OCI-LY7 (cell line): ENCODE measurements at regions of chr9 and their contacts with region 1.

Region 1: GRCh38 chr9:114930056-114930812 is at the start of gene TNFSF8:
- DNase-seq: peak; percentile 90
- H3K4me3 ChIP-seq: peak within 1 kb of the TSS; percentile 76
- H3K27ac ChIP-seq: peak within 1 kb of the TSS; percentile 90
- H3K4me1 ChIP-seq: peaks cover 42% of the 10 kb centered on the region
- CTCF ChIP-seq: 0 out of 2 replicates have a peak, but pooled peaks have one; percentile 18
- total RNA-seq, gene TNFSF8: 27.7 and 28.4 TPM in 2 replicates

Region 2: GRCh38 chr9:114385412-114386181 is 544.6 kb before region 1 on chr9:
- CTCF ChIA-PET with region 1: no interaction called
- POLR2A ChIA-PET with region 1: interaction called, 16 read pairs
- intact Hi-C with region 1: loop called (anchors 5 kb)
- DNase-seq: peak; percentile 95
- H3K4me3 ChIP-seq: peak overlapping the region; percentile 76
- H3K27ac ChIP-seq: peak overlapping the region; percentile 97
- H3K4me1 ChIP-seq: peaks cover 70% of the 10 kb centered on the region
- CTCF ChIP-seq: peak; percentile 17; the same call in 1 of the 2 replicates

Region 3: GRCh38 chr9:114889802-114890251 is 40.4 kb before region 1 on chr9:
- CTCF ChIA-PET with region 1: no interaction called
- POLR2A ChIA-PET with region 1: interaction called, 12 read pairs
- intact Hi-C with region 1: loop called (anchors 2 kb)
- DNase-seq: peak; percentile 76
- H3K4me3 ChIP-seq: no peak overlapping the region
- H3K27ac ChIP-seq: no peak overlapping the region
- H3K4me1 ChIP-seq: peaks cover 51% of the 10 kb centered on the region
- CTCF ChIP-seq: no peak

Region 4: GRCh38 chr9:114906908-114907571 is 23.2 kb before region 1 on chr9:
- CTCF ChIA-PET with region 1: interaction called, 9 read pairs
- POLR2A ChIA-PET with region 1: interaction called, 108 read pairs
- intact Hi-C with region 1: loop called (anchors 1 kb)
- DNase-seq: no peak
- H3K4me3 ChIP-seq: no peak overlapping the region
- H3K27ac ChIP-seq: no peak overlapping the region
- H3K4me1 ChIP-seq: peaks cover 89% of the 10 kb centered on the region
- CTCF ChIP-seq: peak; percentile 82

Region 5: GRCh38 chr9:114919611-114920010 is 10.6 kb before region 1 on chr9:
- CTCF ChIA-PET with region 1: interaction called, 5 read pairs
- POLR2A ChIA-PET with region 1: interaction called, 34 read pairs
- intact Hi-C with region 1: no loop called
- DNase-seq: no peak
- H3K4me3 ChIP-seq: peak overlapping the region; percentile 3
- H3K27ac ChIP-seq: peak overlapping the region; percentile 44
- H3K4me1 ChIP-seq: peaks cover 80% of the 10 kb centered on the region
- CTCF ChIP-seq: no peak

Region 6: GRCh38 chr9:114988962-114989599 is 58.8 kb after region 1 on chr9:
- CTCF ChIA-PET with region 1: no interaction called
- POLR2A ChIA-PET with region 1: no interaction called
- intact Hi-C with region 1: no loop called
- DNase-seq: no peak
- H3K4me3 ChIP-seq: no peak overlapping the region
- H3K27ac ChIP-seq: no peak overlapping the region
- H3K4me1 ChIP-seq: no peaks in the 10 kb centered on the region
- CTCF ChIP-seq: no peak

Region 7: GRCh38 chr9:115013998-115014397 is 83.8 kb after region 1 on chr9:
- CTCF ChIA-PET with region 1: no interaction called
- POLR2A ChIA-PET with region 1: interaction called, 3 read pairs
- intact Hi-C with region 1: loop called (anchors 5 kb)
- DNase-seq: peak; percentile 83
- H3K4me3 ChIP-seq: no peak overlapping the region
- H3K27ac ChIP-seq: no peak overlapping the region
- H3K4me1 ChIP-seq: peaks cover 4% of the 10 kb centered on the region
- CTCF ChIP-seq: peak; percentile 95

Region 8: GRCh38 chr9:115952430-115953316 is 1022.4 kb after region 1 on chr9:
- CTCF ChIA-PET with region 1: no interaction called
- POLR2A ChIA-PET with region 1: no interaction called
- intact Hi-C with region 1: no loop called
- DNase-seq: no peak
- H3K4me3 ChIP-seq: no peak overlapping the region
- H3K27ac ChIP-seq: no peak overlapping the region
- H3K4me1 ChIP-seq: no peaks in the 10 kb centered on the region
- CTCF ChIP-seq: no peak